PC-3 (cell line): ENCODE measurements at regions of chr14 and their contacts with region 1.

Region 1: GRCh38 chr14:69726761-69727511 is 40.0 kb upstream of the SRSF5 start:
- DNase-seq: peak; percentile 82
- ATAC-seq: peak; percentile 96
- H3K4me3 ChIP-seq: peak overlapping the region; percentile 65
- H3K27ac ChIP-seq: no peak overlapping the region
- H3K4me1 ChIP-seq: 0 out of 2 replicates have a peak, but pooled peaks cover 4% of the 10 kb centered on the region
- H3K27me3 ChIP-seq: no peaks in the 10 kb centered on the region
- CTCF ChIP-seq: peak; percentile 99

Region 2: DNA sequence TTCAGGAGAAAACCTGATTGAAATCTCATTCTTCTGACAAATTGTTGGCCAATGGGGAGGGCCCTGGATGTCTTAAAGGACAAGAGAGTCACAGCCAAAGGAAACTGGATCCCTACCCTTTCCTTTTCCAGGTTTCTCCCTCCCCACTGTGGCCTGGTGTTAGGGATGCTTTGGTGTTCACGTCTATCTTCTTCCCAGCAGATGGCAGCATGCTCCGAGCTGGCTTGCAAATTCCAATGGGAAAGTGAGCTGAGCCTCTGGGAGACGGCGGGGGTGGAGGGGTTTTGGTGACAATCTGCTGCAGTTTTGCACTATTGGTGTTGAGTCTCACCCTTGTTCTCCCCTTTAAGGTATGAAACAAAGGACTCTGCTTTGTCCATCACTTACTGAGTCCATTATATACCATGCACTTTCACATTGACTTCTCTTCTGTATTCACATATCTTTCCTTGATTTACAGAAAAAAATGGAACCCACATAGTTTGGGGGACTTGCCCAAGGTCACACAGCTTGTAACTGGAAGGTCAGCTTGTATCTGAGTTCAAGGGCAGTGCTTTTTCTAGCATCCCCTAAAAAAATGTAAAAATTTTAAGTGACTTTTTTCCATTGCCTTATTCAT is 191.6 kb before region 1 on chr14:
- CTCF ChIA-PET with region 1: no interaction called
- POLR2A ChIA-PET with region 1: no interaction called
- intact Hi-C with region 1: loop called (anchors 2 kb)
- DNase-seq: peak; percentile 71
- ATAC-seq: peak; percentile 79
- H3K4me3 ChIP-seq: no peak overlapping the region
- H3K27ac ChIP-seq: no peak overlapping the region
- H3K4me1 ChIP-seq: peaks cover 25% of the 10 kb centered on the region
- H3K27me3 ChIP-seq: peaks cover 4% of the 10 kb centered on the region; the same call in 1 of the 2 replicates
- CTCF ChIP-seq: peak; percentile 91

Region 3: DNA sequence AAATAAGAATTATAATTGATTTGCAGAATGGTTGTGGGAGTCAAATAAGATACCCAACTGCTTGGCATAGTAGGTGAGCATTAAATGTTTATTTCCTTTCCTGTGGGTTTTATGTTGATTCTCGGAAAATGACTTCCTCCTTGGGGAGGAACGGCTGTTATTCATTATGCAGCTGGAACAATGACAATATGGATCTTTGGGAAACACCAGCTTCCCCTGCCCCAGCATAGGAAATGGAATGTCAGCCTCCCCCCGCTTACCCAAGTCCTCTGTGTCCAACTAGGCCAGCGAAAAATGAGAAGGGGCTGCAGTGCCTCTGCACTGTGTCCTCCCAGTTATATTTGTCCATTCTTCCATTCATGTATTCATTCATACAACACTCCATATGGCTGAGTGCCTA is 140.5 kb before region 1 on chr14:
- CTCF ChIA-PET with region 1: interaction called, 15 read pairs
- POLR2A ChIA-PET with region 1: interaction called, 14 read pairs
- intact Hi-C with region 1: loop called (anchors 1 kb)
- DNase-seq: no peak
- ATAC-seq: no peak
- H3K4me3 ChIP-seq: no peak overlapping the region
- H3K27ac ChIP-seq: no peak overlapping the region
- H3K4me1 ChIP-seq: no peaks in the 10 kb centered on the region
- H3K27me3 ChIP-seq: no peaks in the 10 kb centered on the region
- CTCF ChIP-seq: no peak

Region 4: GRCh38 chr14:69693145-69693544 is 33.8 kb before region 1 on chr14:
- CTCF ChIA-PET with region 1: no interaction called
- POLR2A ChIA-PET with region 1: no interaction called
- intact Hi-C with region 1: no loop called
- DNase-seq: no peak
- ATAC-seq: no peak
- H3K4me3 ChIP-seq: no peak overlapping the region
- H3K27ac ChIP-seq: no peak overlapping the region
- H3K4me1 ChIP-seq: no peaks in the 10 kb centered on the region
- H3K27me3 ChIP-seq: no peaks in the 10 kb centered on the region
- CTCF ChIP-seq: no peak

Region 5: DNA sequence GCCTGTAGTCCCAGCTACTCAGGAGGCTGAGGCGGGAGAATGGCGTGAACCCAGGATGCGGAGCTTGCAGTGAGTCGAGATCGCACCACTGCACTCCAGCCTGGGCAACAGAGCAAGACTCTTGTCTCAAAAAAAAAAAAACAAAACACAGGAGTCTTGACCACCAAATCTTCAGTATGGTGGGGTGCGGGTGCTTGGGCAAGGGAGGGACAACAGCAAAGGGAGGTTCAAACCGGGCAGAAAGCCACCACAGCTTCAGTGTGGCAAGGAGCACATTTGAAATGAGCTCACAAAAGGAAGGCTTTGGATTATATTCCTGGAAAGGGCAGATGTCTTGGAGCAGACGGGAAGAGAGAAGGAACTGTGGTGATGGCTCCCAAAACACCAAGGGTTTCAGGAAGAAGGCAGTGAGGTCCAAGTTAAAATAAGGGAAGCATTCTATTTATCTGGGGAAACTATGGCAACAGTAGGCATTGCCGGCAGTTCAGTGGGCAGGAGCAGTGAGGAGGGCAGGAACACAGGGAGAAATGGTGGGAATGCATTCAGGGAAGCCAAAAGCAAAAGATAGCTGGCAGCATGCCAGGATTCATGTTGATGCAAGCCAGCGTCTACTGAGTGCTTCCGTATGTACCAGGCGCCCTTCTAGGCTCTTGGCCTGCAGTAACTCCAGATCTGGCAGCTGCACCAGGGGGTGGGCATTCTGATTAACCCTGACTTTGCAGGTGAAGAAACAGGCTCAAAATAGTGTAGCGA is 11.0 kb before region 1 on chr14:
- CTCF ChIA-PET with region 1: no interaction called
- POLR2A ChIA-PET with region 1: no interaction called
- intact Hi-C with region 1: no loop called
- DNase-seq: no peak
- ATAC-seq: no peak
- H3K4me3 ChIP-seq: no peak overlapping the region
- H3K27ac ChIP-seq: no peak overlapping the region
- H3K4me1 ChIP-seq: peaks cover 14% of the 10 kb centered on the region; the same call in 1 of the 2 replicates
- H3K27me3 ChIP-seq: no peaks in the 10 kb centered on the region
- CTCF ChIP-seq: no peak

Region 6: DNA sequence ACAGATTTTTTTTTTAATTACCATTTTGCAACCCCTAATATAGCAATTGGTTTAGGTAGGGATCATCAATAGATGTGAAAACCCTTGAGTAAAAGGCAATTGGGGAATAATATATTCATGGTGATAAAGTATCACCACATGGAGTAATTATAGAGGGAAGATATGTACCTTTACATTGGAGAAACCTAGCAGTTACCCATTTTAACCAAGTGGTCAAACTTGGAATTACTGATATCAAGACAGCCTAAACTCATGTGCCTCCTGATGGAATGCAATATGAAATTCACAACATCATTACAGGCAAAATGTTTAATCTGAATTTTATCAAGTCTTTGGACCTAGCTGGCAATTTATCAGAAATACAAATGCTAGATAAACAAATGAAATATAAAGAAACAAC is 76.8 kb after region 1 on chr14:
- CTCF ChIA-PET with region 1: no interaction called
- POLR2A ChIA-PET with region 1: no interaction called
- intact Hi-C with region 1: loop called (anchors 1 kb)
- DNase-seq: peak; percentile 48
- ATAC-seq: peak; percentile 91
- H3K4me3 ChIP-seq: no peak overlapping the region
- H3K27ac ChIP-seq: no peak overlapping the region
- H3K4me1 ChIP-seq: no peaks in the 10 kb centered on the region
- H3K27me3 ChIP-seq: peaks cover 26% of the 10 kb centered on the region
- CTCF ChIP-seq: peak; percentile 60

Region 7: GRCh38 chr14:70027785-70028428 is 301.0 kb after region 1 on chr14:
- CTCF ChIA-PET with region 1: interaction called, 19 read pairs
- POLR2A ChIA-PET with region 1: no interaction called
- intact Hi-C with region 1: loop called (anchors 1 kb)
- DNase-seq: peak; percentile 72
- ATAC-seq: peak; percentile 86
- H3K4me3 ChIP-seq: no peak overlapping the region
- H3K27ac ChIP-seq: no peak overlapping the region
- H3K4me1 ChIP-seq: peaks cover 4% of the 10 kb centered on the region; the same call in 1 of the 2 replicates
- H3K27me3 ChIP-seq: peaks cover 67% of the 10 kb centered on the region
- CTCF ChIP-seq: peak; percentile 93